ENCODE measurements at regions of chr5 and their contacts with region 1.

Region 1: GRCh38 chr5:177599731-177600507 is at the start of gene B4GALT7:
- DNase-seq: peak; percentile 74 to 89 (median 86)
- H3K4me3 ChIP-seq: peak within 1 kb of the TSS; percentile 69
- H3K27ac ChIP-seq: peak within 1 kb of the TSS; percentile 62 to 66
- H3K4me1 ChIP-seq: peaks cover 9% of the 10 kb centered on the region
- H3K27me3 ChIP-seq: no peaks in the 10 kb centered on the region
- CTCF ChIP-seq: peak in 1 of 3 donors; percentile 13
- EP300 ChIP-seq: no peak
- POLR2A ChIP-seq: peak; percentile 85
- total RNA-seq, gene B4GALT7: 18.0 to 40.0 (median 27.2) TPM

Region 2: GRCh38 chr5:177049285-177049684 is 550.6 kb before region 1 on chr5:
- intact Hi-C with region 1: no loop called
- DNase-seq: no peak
- H3K4me3 ChIP-seq: no peak overlapping the region
- H3K27ac ChIP-seq: no peak overlapping the region
- H3K4me1 ChIP-seq: no peaks in the 10 kb centered on the region
- H3K27me3 ChIP-seq: no peaks in the 10 kb centered on the region
- CTCF ChIP-seq: no peak
- EP300 ChIP-seq: no peak
- POLR2A ChIP-seq: no peak

Region 3: DNA sequence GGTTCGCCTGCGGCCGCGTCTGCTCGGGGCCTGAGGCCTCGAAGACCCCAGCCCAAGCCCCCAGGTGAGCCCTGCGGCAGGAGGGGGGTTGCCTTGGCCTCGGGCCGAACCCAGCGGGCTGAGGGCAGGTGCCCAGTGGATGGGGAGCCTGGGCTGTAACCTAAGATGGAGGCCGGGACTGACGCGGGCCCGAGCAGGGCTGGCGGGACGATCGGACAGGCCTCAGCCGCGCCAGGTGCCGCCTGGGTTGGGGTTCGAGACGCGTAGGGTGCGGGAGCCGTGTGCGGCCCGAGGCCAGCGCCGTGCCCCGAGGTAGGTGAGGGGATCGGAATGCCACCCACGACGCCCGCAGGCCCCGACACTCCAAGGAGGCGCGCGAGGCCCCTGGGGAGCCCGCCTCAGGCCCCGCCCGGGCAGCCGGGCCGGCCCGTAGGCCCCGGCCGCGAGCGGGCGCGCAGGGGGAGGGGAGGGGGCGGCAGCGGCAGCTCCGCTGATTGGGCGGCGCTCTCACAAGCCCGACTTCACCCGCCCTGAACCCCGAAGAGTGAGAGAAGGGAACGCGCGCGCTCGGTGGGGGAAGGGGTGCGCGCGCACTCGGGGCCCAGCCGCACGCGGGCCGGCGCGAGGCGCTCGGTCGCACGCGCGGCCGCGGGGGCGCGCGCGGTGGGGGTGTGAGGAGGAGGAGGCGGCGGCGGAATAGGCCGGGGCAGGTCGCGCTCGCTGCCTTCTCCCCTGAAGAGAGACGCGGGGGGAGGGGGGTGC is 466.6 kb before region 1 on chr5 and contains the start of gene NSD1:
- intact Hi-C with region 1: no loop called
- DNase-seq: peak; percentile 92 to 96 (median 94)
- H3K4me3 ChIP-seq: peak within 1 kb of the TSS; percentile 78
- H3K27ac ChIP-seq: peak within 1 kb of the TSS; percentile 99
- H3K4me1 ChIP-seq: peaks cover 15% of the 10 kb centered on the region
- H3K27me3 ChIP-seq: no peaks in the 10 kb centered on the region
- CTCF ChIP-seq: no peak
- EP300 ChIP-seq: no peak
- POLR2A ChIP-seq: peak; percentile 88
- total RNA-seq, gene NSD1: 25.6 to 110 (median 83.2) TPM

Region 4: DNA sequence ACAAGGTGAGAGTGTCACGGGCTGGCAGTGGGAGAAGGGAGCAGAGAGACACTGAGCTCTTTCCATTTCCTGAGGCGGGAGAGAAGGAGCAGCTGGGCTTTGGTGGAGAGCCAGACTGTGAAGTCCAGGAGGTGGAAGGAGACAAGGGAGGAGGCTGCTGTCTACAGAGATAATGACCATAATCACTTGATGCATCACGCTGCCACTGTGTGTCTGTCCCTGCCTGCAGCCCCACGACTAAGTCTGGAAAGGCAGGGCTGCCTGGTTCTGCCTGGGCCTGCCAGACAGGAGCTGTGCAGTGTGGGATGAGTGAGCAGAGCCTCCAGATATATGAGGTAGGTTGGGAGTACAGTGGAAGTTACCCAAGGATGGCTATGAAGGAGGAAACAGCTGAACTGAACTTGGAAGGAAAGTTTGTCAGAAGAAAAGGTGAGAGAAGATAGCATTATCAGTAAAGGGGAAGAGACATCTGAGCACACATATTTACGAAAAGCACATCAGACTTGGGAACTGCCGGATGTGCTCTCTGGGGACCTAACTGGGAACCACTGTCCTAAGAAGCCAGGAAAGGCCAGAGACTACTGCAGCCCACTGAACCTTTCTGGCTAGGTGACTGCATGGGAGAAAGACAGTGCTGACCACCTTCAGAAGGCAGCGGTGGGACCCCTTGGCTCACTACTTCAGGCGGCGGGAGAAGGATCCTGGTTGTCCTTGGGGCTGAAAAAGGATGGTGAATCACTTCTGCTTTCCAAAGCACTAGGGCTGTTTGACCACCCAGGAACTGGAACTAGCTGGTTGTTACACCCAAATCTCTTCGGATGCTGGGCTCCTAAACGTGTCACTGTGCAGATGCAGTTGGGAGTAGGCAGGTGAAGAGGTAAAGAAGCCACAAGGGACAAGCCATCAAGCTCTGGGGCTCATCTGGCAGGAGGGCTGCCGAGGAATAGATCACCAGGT is 70.4 kb before region 1 on chr5:
- intact Hi-C with region 1: no loop called
- DNase-seq: peak in 2 of 5 donors; percentile 3 to 17
- H3K4me3 ChIP-seq: no peak overlapping the region
- H3K27ac ChIP-seq: no peak overlapping the region
- H3K4me1 ChIP-seq: no peaks in the 10 kb centered on the region
- H3K27me3 ChIP-seq: no peaks in the 10 kb centered on the region
- CTCF ChIP-seq: no peak
- EP300 ChIP-seq: no peak
- POLR2A ChIP-seq: no peak

Region 5: DNA sequence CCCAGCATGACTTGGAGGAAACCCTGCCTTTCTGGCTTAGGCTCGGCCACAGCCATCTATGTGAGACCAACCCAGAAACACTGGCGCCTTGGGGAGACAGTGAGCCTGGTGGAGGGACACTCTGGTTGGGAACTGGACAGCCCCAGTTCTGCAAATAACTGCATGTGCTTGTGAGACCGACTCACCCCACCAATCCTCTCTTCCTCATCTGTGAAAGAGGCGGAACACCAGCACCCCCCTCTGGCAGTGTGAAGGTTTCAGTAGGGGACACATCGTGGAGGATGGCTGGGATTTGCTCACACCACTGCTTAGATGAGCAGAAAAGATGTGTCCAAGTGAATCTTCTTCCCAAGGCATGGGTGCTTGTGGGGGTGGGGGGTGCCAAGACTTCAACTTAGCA is 470.0 kb after region 1 on chr5:
- intact Hi-C with region 1: loop called in 1 of 4 experiments (anchors 10 kb)
- DNase-seq: peak in 1 of 5 donors; percentile 42
- H3K4me3 ChIP-seq: no peak overlapping the region
- H3K27ac ChIP-seq: no peak overlapping the region
- H3K4me1 ChIP-seq: no peaks in the 10 kb centered on the region
- H3K27me3 ChIP-seq: no peaks in the 10 kb centered on the region
- CTCF ChIP-seq: no peak
- EP300 ChIP-seq: no peak
- POLR2A ChIP-seq: no peak

Region 6: DNA sequence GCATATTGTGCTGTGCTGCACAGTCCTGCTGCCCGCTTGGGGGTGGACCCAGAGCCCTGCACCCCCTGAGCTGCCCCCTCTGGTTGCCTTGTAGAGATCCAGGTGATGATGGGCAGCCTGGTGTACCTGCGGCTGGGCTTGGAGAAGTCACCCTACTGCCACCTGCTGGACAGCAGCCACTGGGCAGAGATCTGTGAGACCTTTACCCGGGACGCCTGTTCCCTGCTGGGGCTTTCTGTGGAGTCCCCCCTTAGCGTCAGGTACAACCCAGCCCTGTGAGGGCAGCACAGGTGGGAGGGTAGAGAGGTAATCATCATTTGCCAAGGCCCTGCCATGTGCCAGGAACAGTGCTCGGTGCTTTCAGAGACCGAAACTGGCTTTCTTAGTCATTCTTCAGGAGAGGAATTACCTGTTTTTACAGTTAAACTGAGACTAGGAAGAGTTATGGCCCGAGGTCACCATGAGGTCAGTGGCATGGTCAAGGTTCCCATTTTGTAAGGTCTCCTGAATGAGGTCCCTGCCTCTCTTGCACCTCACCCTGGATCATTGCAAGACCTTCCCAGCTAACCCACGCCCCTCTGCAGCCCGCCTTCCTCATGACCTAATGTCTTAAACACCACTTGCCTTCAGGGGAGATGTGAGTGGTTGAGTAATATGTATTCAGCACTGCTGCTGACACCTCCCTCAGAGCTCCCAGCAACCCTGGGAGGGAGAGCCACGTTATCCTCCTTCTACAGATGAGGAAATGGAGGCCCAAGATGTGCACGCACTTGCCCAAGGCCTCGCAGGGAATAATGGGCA is 546.3 kb after region 1 on chr5:
- intact Hi-C with region 1: loop called in 1 of 4 experiments (anchors 5 kb)
- DNase-seq: peak; percentile 33 to 63 (median 47)
- H3K4me3 ChIP-seq: no peak overlapping the region
- H3K27ac ChIP-seq: no peak overlapping the region
- H3K4me1 ChIP-seq: no peaks in the 10 kb centered on the region
- H3K27me3 ChIP-seq: no peaks in the 10 kb centered on the region
- CTCF ChIP-seq: peak in 1 of 3 donors; percentile 30
- EP300 ChIP-seq: no peak
- POLR2A ChIP-seq: no peak

Region 7: GRCh38 chr5:178163772-178164735 is 564.1 kb after region 1 on chr5:
- intact Hi-C with region 1: loop called in 1 of 4 experiments (anchors 10 kb)
- DNase-seq: peak; percentile 70 to 89 (median 85)
- H3K4me3 ChIP-seq: no peak overlapping the region
- H3K27ac ChIP-seq: no peak overlapping the region
- H3K4me1 ChIP-seq: peaks cover 2% of the 10 kb centered on the region
- H3K27me3 ChIP-seq: no peaks in the 10 kb centered on the region
- CTCF ChIP-seq: peak; percentile 92 to 93 (median 92)
- EP300 ChIP-seq: no peak
- POLR2A ChIP-seq: no peak